HepG2 (cell line): ENCODE measurements at regions of chr2 and their contacts with region 1.

Region 1: DNA sequence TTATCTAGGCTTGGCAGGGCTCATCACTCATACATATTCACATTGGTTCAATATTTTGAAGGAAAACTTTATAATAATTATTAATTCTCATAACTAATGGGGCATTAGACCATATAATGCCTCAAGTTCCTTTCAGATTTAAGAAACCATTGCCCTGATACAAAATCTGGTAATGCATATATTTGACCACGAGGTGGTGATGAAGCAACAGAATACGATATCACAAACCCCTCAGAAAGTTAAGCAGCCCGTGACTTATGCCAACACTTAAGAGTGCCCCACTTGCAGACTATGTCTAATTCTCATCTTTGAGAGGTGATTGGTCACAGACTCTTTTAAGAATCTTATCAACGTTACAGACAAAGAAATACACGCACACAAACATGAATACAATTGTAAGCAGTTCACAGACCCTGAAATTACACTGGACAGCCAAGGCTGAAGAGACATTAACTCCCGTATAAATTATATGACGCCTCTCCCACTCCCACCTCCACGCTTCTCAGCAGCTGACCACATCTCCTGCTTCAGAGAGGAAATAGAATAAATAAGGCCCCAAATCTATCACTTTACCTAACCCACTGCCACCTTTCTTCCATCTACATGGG is 20.7 kb upstream of the DNAH6 start:
- DNase-seq: peak; percentile 64
- ATAC-seq: peak; percentile 90
- H3K4me3 ChIP-seq: no peak overlapping the region
- H3K27ac ChIP-seq: no peak overlapping the region
- H3K4me1 ChIP-seq: peaks cover 5% of the 10 kb centered on the region; the same call in 1 of the 2 replicates
- H3K27me3 ChIP-seq: no peaks in the 10 kb centered on the region
- CTCF ChIP-seq: peak; percentile 81
- EP300 ChIP-seq: no peak
- POLR2A ChIP-seq: no peak
- RAD21 ChIP-seq: peak; percentile 65

Region 2: DNA sequence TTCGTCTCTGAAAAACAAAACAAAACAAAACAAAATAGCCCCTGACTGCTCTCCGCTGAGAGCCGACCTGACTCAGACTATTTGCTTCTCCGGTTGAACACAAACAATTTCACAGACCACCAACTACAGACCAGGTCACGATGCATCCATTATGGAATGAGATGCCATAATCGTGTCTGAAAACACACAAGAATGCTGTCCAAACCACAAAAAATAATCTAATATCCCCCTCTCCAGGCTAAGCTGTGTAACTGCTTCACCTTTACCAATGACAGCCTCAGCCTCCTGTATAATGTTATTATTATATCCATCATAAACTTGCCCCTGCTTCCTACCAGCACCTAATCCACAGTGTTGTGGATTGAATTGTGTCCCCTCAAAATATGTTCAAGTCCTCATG is 135.4 kb after region 1 on chr2:
- CTCF ChIA-PET with region 1: interaction called, 69 read pairs
- POLR2A ChIA-PET with region 1: no interaction called
- in situ Hi-C with region 1: loop called (anchors 5 kb)
- intact Hi-C with region 1: loop called (anchors 1 kb)
- DNase-seq: peak; percentile 48
- ATAC-seq: peak; percentile 94
- H3K4me3 ChIP-seq: no peak overlapping the region
- H3K27ac ChIP-seq: no peak overlapping the region
- H3K4me1 ChIP-seq: no peaks in the 10 kb centered on the region
- H3K27me3 ChIP-seq: no peaks in the 10 kb centered on the region
- CTCF ChIP-seq: peak; percentile 78
- EP300 ChIP-seq: no peak
- POLR2A ChIP-seq: no peak
- RAD21 ChIP-seq: peak; percentile 70

Region 3: DNA sequence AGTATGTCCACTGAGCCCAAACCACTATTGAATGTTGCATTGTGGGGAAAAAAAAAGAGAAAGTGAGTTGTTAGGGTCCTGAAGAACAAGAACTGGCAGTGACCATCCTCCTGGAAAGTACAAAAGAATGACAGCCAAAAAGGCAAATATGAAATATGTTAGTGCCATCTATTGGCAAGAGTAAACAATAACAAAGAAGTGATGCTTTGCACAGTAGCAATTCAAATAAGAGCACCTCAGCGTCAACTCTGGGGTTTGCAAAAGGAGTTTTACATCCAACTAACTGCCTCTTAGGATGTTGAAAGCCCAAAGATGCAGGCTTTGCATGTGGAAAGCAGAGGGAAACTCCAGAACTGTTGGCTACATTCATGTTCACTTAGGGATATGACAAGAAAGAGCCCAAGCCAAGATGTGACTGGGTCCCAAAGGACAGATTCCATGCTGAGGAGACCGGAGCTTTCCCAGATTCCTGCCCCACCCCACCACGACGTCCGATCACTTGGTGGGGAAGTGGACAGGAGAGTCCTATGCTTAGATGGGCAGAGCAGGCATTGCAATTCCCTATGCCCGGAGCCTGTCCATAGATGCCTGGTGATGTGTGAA is 369.6 kb after region 1 on chr2:
- CTCF ChIA-PET with region 1: no interaction called
- POLR2A ChIA-PET with region 1: no interaction called
- in situ Hi-C with region 1: no loop called
- intact Hi-C with region 1: loop called (anchors 5 kb)
- DNase-seq: no peak
- ATAC-seq: no peak
- H3K4me3 ChIP-seq: no peak overlapping the region
- H3K27ac ChIP-seq: no peak overlapping the region
- H3K4me1 ChIP-seq: no peaks in the 10 kb centered on the region
- H3K27me3 ChIP-seq: peaks cover 0 to 25% of the 10 kb centered on the region in 2 experiments; a peak in 3 of 5 replicates
- CTCF ChIP-seq: peak; percentile 42
- EP300 ChIP-seq: no peak
- POLR2A ChIP-seq: no peak
- RAD21 ChIP-seq: no peak